Activated B cell treated with CpG ODN at 0.5 μM for 24 hours (primary cell): ENCODE measurements at regions of chr12 and their contacts with region 1.

Region 1: DNA sequence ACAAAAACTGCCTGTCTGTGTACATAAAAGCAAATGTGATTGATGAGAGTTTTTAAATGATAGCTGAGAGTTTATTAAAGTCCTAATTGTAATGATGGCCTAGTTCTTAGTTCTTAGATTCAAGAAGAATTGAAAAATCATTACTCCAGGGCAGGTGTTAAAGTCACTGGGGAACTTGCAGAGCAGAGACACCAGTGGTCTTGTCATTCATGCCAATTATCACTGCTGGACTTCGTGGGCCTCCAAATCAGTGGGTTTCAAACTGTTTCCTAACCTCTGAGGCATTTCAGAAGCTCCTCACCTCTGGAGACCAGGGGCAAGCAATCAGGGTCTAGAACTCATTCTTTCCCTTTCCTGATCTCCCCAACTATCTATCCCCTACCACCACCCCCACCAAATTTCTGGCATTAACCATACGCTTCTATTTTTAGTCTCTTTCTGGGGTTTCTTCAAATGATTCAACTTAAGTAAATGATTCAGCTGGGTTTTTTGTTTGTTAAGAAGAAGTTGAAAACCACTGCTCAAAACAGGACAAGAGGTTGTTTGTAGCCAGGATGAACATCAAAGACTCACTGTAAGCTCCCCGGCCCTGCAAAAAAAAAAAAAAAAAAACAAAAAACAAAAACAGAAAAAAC is 80.1 kb downstream of the CEP83 start:
- DNase-seq: no peak
- ATAC-seq: no peak
- H3K4me3 Mint-ChIP-seq: no peak overlapping the region
- H3K27ac Mint-ChIP-seq: no peak overlapping the region
- H3K4me1 Mint-ChIP-seq: peaks cover 6% of the 10 kb centered on the region
- H3K27me3 Mint-ChIP-seq: no peaks in the 10 kb centered on the region
- CTCF ChIP-seq: no peak

Region 2: DNA sequence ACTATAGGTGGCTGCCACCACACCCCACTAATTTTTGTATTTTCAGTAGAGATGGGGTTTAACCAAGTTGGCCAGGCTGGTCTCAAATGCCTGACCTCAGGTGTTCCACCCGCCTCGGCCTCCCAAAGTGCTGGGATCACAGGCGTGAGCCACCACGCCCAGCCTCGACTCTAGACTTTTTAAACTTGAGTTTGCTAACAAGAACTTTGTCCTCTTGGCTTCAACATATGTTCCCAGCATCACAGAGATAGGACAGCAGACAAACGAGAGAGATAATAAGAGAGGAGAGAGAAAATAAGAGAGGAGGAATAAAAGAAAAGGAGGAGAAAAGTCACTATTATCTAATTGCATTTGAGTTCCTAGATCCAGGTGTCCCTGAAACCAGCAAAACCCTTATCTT is 39.0 kb before region 1 on chr12:
- CTCF ChIA-PET with region 1: no interaction called
- POLR2A ChIA-PET with region 1: no interaction called
- intact Hi-C with region 1: loop called (anchors 5 kb)
- DNase-seq: no peak
- ATAC-seq: no peak
- H3K4me3 Mint-ChIP-seq: no peak overlapping the region
- H3K27ac Mint-ChIP-seq: no peak overlapping the region
- H3K4me1 Mint-ChIP-seq: peaks cover 4% of the 10 kb centered on the region
- H3K27me3 Mint-ChIP-seq: no peaks in the 10 kb centered on the region
- CTCF ChIP-seq: no peak

Region 3: DNA sequence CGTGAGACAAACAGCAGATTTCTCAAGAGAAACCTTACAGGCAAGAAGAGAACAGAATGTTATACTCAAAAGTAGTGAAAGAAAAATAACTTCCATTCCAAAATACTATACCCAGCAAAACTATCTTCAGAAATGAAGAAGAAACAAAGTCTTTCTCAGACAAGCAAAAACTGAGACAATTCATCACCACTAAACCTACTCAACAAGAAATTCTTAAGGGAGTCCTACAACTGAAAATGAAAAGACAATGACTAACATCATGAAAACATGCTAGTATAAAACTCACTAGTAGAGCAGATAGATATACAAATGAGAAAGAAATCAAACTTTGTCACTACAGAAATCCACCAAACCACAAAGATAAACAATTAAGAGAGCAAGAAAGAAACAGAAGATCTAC is 26.5 kb before region 1 on chr12:
- CTCF ChIA-PET with region 1: no interaction called
- POLR2A ChIA-PET with region 1: no interaction called
- intact Hi-C with region 1: no loop called
- DNase-seq: no peak
- ATAC-seq: no peak
- H3K4me3 Mint-ChIP-seq: no peak overlapping the region
- H3K27ac Mint-ChIP-seq: no peak overlapping the region
- H3K4me1 Mint-ChIP-seq: no peaks in the 10 kb centered on the region
- H3K27me3 Mint-ChIP-seq: no peaks in the 10 kb centered on the region
- CTCF ChIP-seq: no peak

Region 4: DNA sequence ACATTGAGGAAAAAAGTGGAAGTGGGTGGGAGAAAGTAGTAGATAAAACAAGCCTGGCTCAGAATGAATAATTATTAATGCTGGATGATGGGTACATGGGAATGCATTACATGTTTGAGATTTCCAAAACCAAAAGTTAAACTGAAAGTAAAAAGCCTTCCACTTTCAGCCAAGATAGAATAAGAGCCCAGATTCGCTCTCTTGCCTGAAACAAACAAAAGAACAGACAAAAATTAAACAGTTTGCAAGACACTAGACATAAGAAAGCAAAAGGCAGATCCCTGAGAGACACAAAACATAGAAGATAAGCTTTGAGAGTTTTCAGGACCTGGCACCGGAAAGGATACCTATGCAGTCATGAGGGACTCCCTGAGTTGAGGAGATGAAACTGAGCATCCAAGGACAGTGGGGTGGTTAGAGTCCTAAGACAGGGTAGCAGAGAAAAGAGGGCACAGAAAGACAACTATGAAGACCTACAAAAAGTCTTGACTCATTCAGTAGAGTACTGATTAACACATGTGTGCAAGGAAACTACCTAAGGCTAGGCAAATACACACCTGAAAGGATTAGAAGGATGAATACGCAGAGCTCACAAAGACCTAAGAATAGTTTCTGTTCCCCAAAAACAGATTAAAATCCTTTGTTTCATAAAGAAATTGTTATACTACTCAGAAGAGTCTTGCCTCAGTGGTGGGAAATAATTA is 26.0 kb after region 1 on chr12:
- CTCF ChIA-PET with region 1: no interaction called
- POLR2A ChIA-PET with region 1: no interaction called
- intact Hi-C with region 1: loop called (anchors 5 kb)
- DNase-seq: no peak
- ATAC-seq: no peak
- H3K4me3 Mint-ChIP-seq: peak overlapping the region; percentile 61
- H3K27ac Mint-ChIP-seq: peak overlapping the region; percentile 80
- H3K4me1 Mint-ChIP-seq: peaks cover 17% of the 10 kb centered on the region
- H3K27me3 Mint-ChIP-seq: no peaks in the 10 kb centered on the region
- CTCF ChIP-seq: no peak